ENCODE measurements at regions of chr5 and their contacts with region 1.

Region 1: DNA sequence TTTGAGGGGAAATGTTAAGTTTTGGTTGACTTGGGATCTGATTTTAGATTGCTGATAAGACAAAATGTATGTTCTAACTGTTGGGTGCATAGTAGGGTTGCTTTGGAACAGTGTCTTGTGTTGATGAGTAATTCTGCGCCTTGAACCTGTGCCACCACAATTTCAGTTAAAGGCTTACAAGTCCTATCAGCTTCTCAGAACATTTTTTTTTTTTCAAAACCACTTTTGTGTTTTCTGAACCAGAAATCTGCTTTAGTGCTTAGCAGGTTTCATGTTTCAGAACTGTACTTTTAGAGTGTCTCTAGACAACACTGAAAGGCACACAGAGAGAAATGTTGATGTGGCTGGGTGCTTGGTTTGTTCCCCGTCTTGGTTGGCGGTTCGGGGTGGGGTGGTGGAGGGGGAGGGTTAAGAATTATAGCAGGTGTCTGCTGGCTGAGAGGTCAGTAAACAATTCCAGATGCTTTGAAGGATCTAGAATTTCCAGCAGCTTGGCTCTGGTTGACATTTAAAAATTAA is 84.6 kb downstream of the ANKRD55 start:
- DNase-seq: peak; percentile 80
- H3K4me3 Mint-ChIP-seq: peak overlapping the region; percentile 53
- H3K27ac Mint-ChIP-seq: peak overlapping the region; percentile 93
- H3K4me1 Mint-ChIP-seq: peaks cover 68% of the 10 kb centered on the region
- H3K27me3 Mint-ChIP-seq: no peaks in the 10 kb centered on the region

Region 2: DNA sequence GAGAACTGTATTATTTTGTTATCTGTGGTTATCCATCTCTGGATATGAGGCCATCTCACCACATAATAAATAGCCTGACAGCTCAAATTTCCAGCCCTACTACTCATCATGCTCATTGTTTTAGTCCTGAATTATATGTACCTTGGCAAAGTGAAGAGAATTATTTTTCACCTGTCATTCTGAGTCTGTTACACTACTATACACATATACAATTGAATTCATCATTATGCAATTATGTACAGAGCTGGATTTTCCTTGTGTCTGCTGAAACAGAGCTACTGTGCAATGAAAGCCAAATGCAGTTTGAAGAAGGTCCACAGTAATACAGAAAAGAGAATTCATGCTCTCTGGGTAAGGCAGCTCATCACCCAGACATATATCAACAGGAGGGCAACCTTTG is 1191.6 kb before region 1 on chr5:
- CTCF ChIA-PET with region 1: no interaction called
- intact Hi-C with region 1: no loop called
- DNase-seq: no peak
- H3K4me3 Mint-ChIP-seq: no peak overlapping the region
- H3K27ac Mint-ChIP-seq: no peak overlapping the region
- H3K4me1 Mint-ChIP-seq: no peaks in the 10 kb centered on the region
- H3K27me3 Mint-ChIP-seq: peaks cover 2% of the 10 kb centered on the region

Region 3: GRCh38 chr5:56080375-56081052 is 68.0 kb before region 1 on chr5:
- CTCF ChIA-PET with region 1: interaction called, 3 read pairs
- intact Hi-C with region 1: loop called (anchors 1 kb)
- DNase-seq: peak; percentile 72
- H3K4me3 Mint-ChIP-seq: peak overlapping the region; percentile 5
- H3K27ac Mint-ChIP-seq: peak overlapping the region; percentile 90
- H3K4me1 Mint-ChIP-seq: peaks cover 72% of the 10 kb centered on the region
- H3K27me3 Mint-ChIP-seq: no peaks in the 10 kb centered on the region

Region 4: DNA sequence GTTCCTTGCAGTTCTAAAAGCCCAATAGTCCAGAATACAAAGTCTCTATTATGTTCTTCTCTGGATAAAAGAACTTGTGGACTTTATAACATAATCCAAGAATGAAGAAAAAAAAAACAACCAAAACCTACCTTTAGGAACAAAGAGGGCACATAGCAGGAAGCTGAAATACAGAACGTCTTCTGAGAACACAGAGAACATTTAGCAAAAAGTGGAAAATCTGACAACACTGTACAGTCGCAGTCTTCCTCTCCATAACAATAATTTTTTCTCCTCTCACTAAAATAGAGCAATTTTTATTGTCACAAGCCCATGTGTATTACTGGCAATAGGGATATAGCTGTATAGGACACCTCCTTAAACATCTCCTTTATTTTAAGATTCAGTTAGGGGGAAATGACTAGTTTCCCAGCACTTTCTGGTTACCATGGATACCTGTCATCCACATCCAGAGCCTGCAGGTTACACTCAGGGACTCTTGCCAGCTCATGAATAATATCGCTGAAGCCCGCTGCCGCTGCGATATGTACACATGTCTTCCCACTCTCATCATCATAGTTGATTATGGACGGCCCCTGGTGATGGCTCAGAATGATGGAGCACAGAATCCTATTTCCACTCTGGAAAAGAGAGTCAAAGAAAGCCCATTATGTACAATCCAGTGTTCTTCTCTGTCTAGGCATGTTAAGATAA is 21.9 kb before region 1 on chr5:
- CTCF ChIA-PET with region 1: interaction called, 10 read pairs
- intact Hi-C with region 1: loop called (anchors 1 kb)
- DNase-seq: peak; percentile 83
- H3K4me3 Mint-ChIP-seq: peak overlapping the region; percentile 74
- H3K27ac Mint-ChIP-seq: peak overlapping the region; percentile 97
- H3K4me1 Mint-ChIP-seq: peaks cover 75% of the 10 kb centered on the region
- H3K27me3 Mint-ChIP-seq: no peaks in the 10 kb centered on the region

Region 5: GRCh38 chr5:56190497-56190896 is 42.0 kb after region 1 on chr5:
- CTCF ChIA-PET with region 1: interaction called, 4 read pairs
- intact Hi-C with region 1: loop called (anchors 1 kb)
- DNase-seq: peak; percentile 64
- H3K4me3 Mint-ChIP-seq: no peak overlapping the region
- H3K27ac Mint-ChIP-seq: no peak overlapping the region
- H3K4me1 Mint-ChIP-seq: peaks cover 22% of the 10 kb centered on the region
- H3K27me3 Mint-ChIP-seq: no peaks in the 10 kb centered on the region

Region 6: DNA sequence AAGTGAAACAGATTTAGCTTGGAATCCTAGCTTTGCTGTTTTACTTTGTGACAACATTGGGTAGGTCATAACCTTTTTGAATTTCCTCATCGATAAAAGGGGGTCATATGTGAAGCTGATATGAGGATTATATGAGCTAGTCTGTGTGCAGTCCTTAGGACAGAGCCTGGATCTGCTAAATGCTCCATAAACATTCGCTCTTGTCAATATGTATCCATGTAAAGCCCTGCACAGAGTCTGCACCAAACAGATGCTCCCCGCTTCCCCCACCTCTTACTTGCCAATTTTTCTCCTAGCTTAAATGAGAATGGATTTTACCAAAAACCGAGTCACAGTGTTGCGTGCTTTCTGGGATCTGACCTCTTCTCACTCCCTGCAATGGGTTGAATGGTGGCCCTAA is 79.2 kb after region 1 on chr5:
- CTCF ChIA-PET with region 1: no interaction called
- intact Hi-C with region 1: no loop called
- DNase-seq: no peak
- H3K4me3 Mint-ChIP-seq: no peak overlapping the region
- H3K27ac Mint-ChIP-seq: no peak overlapping the region
- H3K4me1 Mint-ChIP-seq: no peaks in the 10 kb centered on the region
- H3K27me3 Mint-ChIP-seq: no peaks in the 10 kb centered on the region

Measured in activated naive CD4-positive, alpha-beta T cell treated with anti-CD3 and anti-CD28 coated beads for 36 hours (primary cell).